ENCODE measurements at regions of chr14 and their contacts with region 1.

Region 1: DNA sequence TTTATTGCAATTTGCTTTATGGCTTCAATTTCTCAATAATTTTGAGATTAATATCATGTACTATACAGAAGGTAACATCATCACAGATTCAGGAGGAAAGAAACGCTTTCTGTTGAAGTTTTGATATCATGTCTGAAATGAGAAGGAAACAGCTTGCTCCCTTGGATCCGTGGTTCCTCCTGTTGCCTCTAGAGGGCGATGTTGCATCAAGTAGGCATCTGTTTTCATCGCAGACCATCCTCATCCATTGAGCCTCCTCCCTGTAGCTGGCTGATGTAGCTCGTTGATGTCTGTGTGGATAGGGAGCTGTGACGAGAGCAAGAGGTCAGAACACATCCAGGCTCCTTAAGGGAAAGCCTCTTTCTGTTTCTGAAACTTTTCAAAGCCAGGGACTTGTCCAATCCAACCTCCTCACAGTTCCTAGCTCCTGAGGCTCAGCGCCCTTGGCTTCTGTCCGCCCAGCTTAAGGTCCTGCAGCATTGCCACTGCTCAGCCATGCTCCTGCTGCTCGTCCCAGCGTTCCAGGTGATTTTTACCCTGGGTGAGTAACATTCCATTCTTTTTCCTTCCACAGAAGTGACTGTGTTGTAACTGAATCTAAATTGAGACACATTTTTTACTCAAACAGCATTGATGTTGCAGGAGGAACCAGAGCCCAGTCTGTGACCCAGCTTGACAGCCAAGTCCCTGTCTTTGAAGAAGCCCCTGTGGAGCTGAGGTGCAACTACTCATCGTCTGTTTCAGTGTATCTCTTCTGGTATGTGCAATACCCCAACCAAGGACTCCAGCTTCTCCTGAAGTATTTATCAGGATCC is 304.8 kb upstream of the OR4E1 start:
- DNase-seq: no peak
- ATAC-seq: peak; percentile 76
- H3K4me3 ChIP-seq: no peak overlapping the region
- H3K27ac ChIP-seq: no peak overlapping the region
- H3K4me1 ChIP-seq: no peaks in the 10 kb centered on the region
- H3K27me3 ChIP-seq: no peaks in the 10 kb centered on the region
- CTCF ChIP-seq: peak; percentile 76 to 89 (median 87)
- EP300 ChIP-seq: no peak
- POLR2A ChIP-seq: no peak
- RAD21 ChIP-seq: peak; percentile 55

Region 2: GRCh38 chr14:21917699-21918436 is 60.5 kb before region 1 on chr14:
- CTCF ChIA-PET with region 1: interaction called, 18 read pairs
- POLR2A ChIA-PET with region 1: no interaction called
- RAD21 ChIA-PET with region 1: interaction called, 3 read pairs
- SMC1A ChIA-PET with region 1: no interaction called
- in situ Hi-C with region 1: no loop called
- intact Hi-C with region 1: no loop called
- DNase-seq: peak; percentile 3
- ATAC-seq: peak; percentile 87
- H3K4me3 ChIP-seq: no peak overlapping the region
- H3K27ac ChIP-seq: no peak overlapping the region
- H3K4me1 ChIP-seq: no peaks in the 10 kb centered on the region
- H3K27me3 ChIP-seq: no peaks in the 10 kb centered on the region
- CTCF ChIP-seq: peak; percentile 70 to 89 (median 74)
- EP300 ChIP-seq: no peak
- POLR2A ChIP-seq: no peak
- RAD21 ChIP-seq: peak; percentile 65

Region 3: GRCh38 chr14:21965042-21965441 is 13.3 kb before region 1 on chr14:
- CTCF ChIA-PET with region 1: interaction called, 14 read pairs
- POLR2A ChIA-PET with region 1: no interaction called
- RAD21 ChIA-PET with region 1: no interaction called
- SMC1A ChIA-PET with region 1: no interaction called
- in situ Hi-C with region 1: no loop called
- intact Hi-C with region 1: no loop called
- DNase-seq: no peak
- ATAC-seq: no peak
- H3K4me3 ChIP-seq: no peak overlapping the region
- H3K27ac ChIP-seq: no peak overlapping the region
- H3K4me1 ChIP-seq: no peaks in the 10 kb centered on the region
- H3K27me3 ChIP-seq: no peaks in the 10 kb centered on the region; a peak in 1 of 4 replicates
- CTCF ChIP-seq: no peak
- EP300 ChIP-seq: no peak
- POLR2A ChIP-seq: no peak
- RAD21 ChIP-seq: no peak

Region 4: DNA sequence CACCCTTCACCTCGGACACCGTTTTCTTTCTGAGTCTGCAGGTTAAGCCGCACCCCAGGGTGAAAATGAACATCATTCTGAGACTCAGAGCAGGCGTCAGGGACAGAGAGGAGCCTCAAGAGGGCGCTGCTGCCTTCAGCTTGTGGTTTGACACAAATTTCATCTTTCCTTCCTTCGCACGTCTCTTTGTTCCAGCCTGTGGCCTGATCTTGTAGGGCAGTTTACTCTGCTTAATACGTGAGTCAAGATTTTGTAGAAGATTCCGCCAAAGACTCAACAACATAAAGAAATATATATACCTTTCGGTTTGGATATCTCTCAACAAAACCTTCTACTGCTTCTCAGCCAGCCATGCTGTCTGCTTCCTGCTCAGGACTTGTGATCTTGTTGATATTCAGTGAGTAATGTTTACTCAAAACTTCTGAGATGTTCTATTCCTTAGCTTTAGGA is 24.5 kb after region 1 on chr14:
- CTCF ChIA-PET with region 1: interaction called, 13 read pairs
- POLR2A ChIA-PET with region 1: no interaction called
- RAD21 ChIA-PET with region 1: no interaction called
- SMC1A ChIA-PET with region 1: interaction called, 7 read pairs
- in situ Hi-C with region 1: no loop called
- intact Hi-C with region 1: no loop called
- DNase-seq: no peak
- ATAC-seq: peak; percentile 41; the same call in 2 of the 3 replicates
- H3K4me3 ChIP-seq: no peak overlapping the region
- H3K27ac ChIP-seq: no peak overlapping the region
- H3K4me1 ChIP-seq: no peaks in the 10 kb centered on the region
- H3K27me3 ChIP-seq: no peaks in the 10 kb centered on the region
- CTCF ChIP-seq: peak; percentile 22 to 48 (median 42); a peak in 4 of 6 replicates
- EP300 ChIP-seq: no peak
- POLR2A ChIP-seq: no peak
- RAD21 ChIP-seq: no peak

Region 5: GRCh38 chr14:22131749-22132476 is 153.5 kb after region 1 on chr14:
- CTCF ChIA-PET with region 1: no interaction called
- POLR2A ChIA-PET with region 1: no interaction called
- RAD21 ChIA-PET with region 1: no interaction called
- SMC1A ChIA-PET with region 1: no interaction called
- in situ Hi-C with region 1: no loop called
- intact Hi-C with region 1: no loop called
- DNase-seq: no peak
- ATAC-seq: no peak
- H3K4me3 ChIP-seq: no peak overlapping the region
- H3K27ac ChIP-seq: no peak overlapping the region
- H3K4me1 ChIP-seq: no peaks in the 10 kb centered on the region
- H3K27me3 ChIP-seq: no peaks in the 10 kb centered on the region
- CTCF ChIP-seq: peak; percentile 23 to 61 (median 39); a peak in 5 of 6 replicates
- EP300 ChIP-seq: no peak
- POLR2A ChIP-seq: no peak
- RAD21 ChIP-seq: no peak

Measured in GM12878 (cell line).